PC-3 (cell line): ENCODE measurements at regions of chr5 and their contacts with region 1.

Region 1: GRCh38 chr5:126339215-126339805 is 83.9 kb upstream of the GRAMD2B start:
- DNase-seq: peak; percentile 82
- ATAC-seq: peak; percentile 48
- H3K4me3 ChIP-seq: no peak overlapping the region
- H3K27ac ChIP-seq: no peak overlapping the region
- H3K4me1 ChIP-seq: peaks cover 34% of the 10 kb centered on the region
- H3K27me3 ChIP-seq: no peaks in the 10 kb centered on the region
- CTCF ChIP-seq: peak; percentile 88

Region 2: DNA sequence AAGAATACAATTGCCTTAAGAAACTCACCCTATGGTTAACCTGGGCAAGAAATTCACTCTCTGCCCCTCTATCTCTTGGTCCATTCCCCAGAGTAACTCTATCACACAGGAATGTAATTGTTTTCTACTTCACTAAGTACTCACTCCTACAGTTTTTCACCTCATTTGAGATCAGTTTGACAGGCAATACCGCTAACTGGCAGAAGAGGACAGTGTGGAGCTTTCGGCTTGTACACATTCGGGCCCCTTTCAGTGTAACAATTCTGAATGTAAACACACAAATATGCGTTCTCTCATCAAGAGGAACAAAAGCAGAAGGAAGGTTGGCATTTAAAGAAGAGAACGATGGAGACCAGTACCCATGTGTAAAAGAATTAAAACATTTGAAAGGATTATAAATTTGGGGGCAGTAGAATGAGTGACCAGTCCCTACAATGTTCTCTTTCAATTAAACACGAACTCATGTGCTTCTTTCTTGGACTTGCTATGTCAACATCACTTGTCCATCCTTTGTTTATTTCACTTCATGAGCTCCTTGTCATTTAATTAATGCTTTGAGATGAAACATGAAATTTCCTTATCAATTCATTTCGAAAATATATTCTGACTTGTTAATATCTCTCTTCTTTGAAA is 104.6 kb before region 1 on chr5:
- CTCF ChIA-PET with region 1: no interaction called
- POLR2A ChIA-PET with region 1: no interaction called
- intact Hi-C with region 1: loop called (anchors 10 kb)
- DNase-seq: peak; percentile 60
- ATAC-seq: peak; percentile 79
- H3K4me3 ChIP-seq: peak overlapping the region; percentile 32; the same call in 1 of the 2 replicates
- H3K27ac ChIP-seq: no peak overlapping the region
- H3K4me1 ChIP-seq: no peaks in the 10 kb centered on the region; the same call in 1 of the 2 replicates
- H3K27me3 ChIP-seq: no peaks in the 10 kb centered on the region
- CTCF ChIP-seq: peak; percentile 86

Region 3: DNA sequence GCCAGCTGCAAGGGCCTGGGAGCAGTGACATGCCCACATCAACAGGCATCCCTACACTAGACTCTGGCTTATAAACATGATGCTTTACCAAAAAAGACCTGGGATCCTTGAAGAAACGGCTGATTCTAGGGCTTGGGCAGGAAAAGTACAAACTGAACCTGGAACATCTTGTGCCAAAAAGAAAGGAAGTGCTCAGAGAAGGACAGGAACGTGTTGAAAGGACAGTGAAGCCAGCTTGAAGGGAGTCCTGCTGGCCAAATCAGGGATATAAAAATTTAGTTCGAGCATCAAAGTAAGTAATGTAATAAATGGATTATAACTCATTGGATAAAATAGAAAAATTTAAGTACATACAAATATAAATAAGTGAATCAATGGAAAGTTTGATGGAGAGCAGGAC is 197.6 kb after region 1 on chr5:
- CTCF ChIA-PET with region 1: interaction called, 16 read pairs
- POLR2A ChIA-PET with region 1: no interaction called
- intact Hi-C with region 1: loop called (anchors 1 kb)
- DNase-seq: no peak
- ATAC-seq: no peak
- H3K4me3 ChIP-seq: no peak overlapping the region
- H3K27ac ChIP-seq: no peak overlapping the region
- H3K4me1 ChIP-seq: peaks cover 8% of the 10 kb centered on the region
- H3K27me3 ChIP-seq: no peaks in the 10 kb centered on the region
- CTCF ChIP-seq: no peak

Region 4: GRCh38 chr5:126594676-126595485 is 255.6 kb after region 1 on chr5 and contains the start of gene ALDH7A1:
- CTCF ChIA-PET with region 1: no interaction called
- POLR2A ChIA-PET with region 1: no interaction called
- intact Hi-C with region 1: loop called (anchors 1 kb)
- DNase-seq: peak; percentile 91
- ATAC-seq: peak; percentile 81
- H3K4me3 ChIP-seq: peak within 1 kb of the TSS; percentile 76
- H3K27ac ChIP-seq: peak within 1 kb of the TSS; percentile 49
- H3K4me1 ChIP-seq: peaks cover 18% of the 10 kb centered on the region
- H3K27me3 ChIP-seq: no peaks in the 10 kb centered on the region
- CTCF ChIP-seq: peak; percentile 59
- total RNA-seq, gene ALDH7A1: 45.8 and 45.9 TPM in 2 replicates